MCF 10A (cell line): ENCODE measurements at regions of chr10 and their contacts with region 1.

Region 1: DNA sequence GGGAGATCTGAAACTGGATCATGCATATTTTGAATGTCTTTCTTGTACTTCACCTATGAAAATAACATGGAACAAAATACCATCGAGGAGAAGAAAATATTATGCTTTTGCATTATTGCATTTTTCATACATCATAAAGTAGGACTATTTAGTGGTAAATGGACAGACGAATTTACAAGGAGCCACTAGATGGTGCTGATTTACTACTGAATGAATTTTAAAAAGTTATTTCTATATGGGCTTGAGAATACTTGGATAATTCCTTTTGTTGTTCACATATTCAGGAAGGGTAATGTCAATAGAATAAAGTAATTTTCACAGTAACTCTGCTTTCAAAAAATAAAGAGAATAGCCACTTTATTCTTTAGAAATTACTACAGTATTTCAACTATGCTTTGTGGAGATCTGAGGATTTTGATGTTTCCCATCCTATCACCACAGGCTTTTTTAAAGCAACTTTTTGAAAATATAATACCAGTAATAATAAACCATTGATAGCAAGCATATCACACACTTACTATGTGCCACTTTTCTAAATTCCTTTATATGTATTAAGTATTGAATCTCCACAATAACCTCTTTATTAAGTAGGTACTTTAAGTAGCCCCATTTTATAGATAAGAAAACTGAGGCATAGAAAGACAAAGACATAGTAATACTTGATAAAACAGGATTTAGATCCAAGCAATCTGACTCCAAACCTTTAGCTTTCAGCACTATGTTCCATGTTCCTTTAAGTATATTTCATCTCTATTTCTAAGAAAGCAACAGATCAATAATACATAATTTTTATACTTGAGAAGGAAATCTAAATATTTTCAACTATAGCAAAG is 38.6 kb downstream of the NEBL start:
- DNase-seq: peak; percentile 53
- H3K4me3 Mint-ChIP-seq: no peak overlapping the region
- H3K27ac Mint-ChIP-seq: no peak overlapping the region
- H3K4me1 Mint-ChIP-seq: peaks cover 2% of the 10 kb centered on the region
- H3K27me3 Mint-ChIP-seq: no peaks in the 10 kb centered on the region
- CTCF ChIP-seq: peak; percentile 37

Region 2: GRCh38 chr10:20846263-20846662 is 12.2 kb before region 1 on chr10:
- CTCF ChIA-PET with region 1: no interaction called
- POLR2A ChIA-PET with region 1: no interaction called
- intact Hi-C with region 1: no loop called
- DNase-seq: no peak
- H3K4me3 Mint-ChIP-seq: no peak overlapping the region
- H3K27ac Mint-ChIP-seq: no peak overlapping the region
- H3K4me1 Mint-ChIP-seq: no peaks in the 10 kb centered on the region
- H3K27me3 Mint-ChIP-seq: no peaks in the 10 kb centered on the region
- CTCF ChIP-seq: no peak

Region 3: GRCh38 chr10:21265621-21266020 is 407.1 kb after region 1 on chr10:
- CTCF ChIA-PET with region 1: interaction called, 11 read pairs
- POLR2A ChIA-PET with region 1: no interaction called
- intact Hi-C with region 1: loop called (anchors 1 kb)
- DNase-seq: peak; percentile 83
- H3K4me3 Mint-ChIP-seq: peak overlapping the region; percentile 35
- H3K27ac Mint-ChIP-seq: peak overlapping the region; percentile 93
- H3K4me1 Mint-ChIP-seq: peaks cover 20% of the 10 kb centered on the region
- H3K27me3 Mint-ChIP-seq: no peaks in the 10 kb centered on the region
- CTCF ChIP-seq: no peak

Region 4: DNA sequence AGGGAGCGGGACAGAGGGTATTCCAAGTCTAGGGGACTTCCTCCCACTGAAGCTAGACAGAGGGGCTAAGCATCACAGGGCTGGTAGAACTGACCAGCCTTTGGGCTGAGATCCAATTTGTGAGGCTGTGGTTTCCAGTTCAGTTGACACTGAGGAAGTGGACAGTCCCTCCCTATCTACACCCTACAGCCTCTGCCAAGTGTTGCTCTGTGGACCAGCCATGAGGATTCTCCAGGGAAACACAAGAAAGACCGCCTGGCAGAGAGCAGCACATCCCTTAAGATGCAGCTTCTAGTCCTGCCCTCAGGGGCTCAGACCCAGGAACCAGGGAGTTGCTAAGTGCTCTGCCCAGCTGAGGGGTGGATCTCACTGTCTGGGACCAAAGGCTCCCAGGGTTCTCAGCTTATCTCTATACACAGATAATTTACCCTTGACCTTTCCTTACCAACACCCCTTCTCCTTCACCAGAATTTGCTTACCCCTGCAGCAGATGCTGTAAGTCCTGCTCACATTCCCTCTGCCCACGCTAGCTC is 415.0 kb after region 1 on chr10:
- CTCF ChIA-PET with region 1: interaction called, 11 read pairs
- POLR2A ChIA-PET with region 1: no interaction called
- intact Hi-C with region 1: loop called (anchors 1 kb)
- DNase-seq: no peak
- H3K4me3 Mint-ChIP-seq: no peak overlapping the region
- H3K27ac Mint-ChIP-seq: no peak overlapping the region
- H3K4me1 Mint-ChIP-seq: peaks cover 11% of the 10 kb centered on the region
- H3K27me3 Mint-ChIP-seq: no peaks in the 10 kb centered on the region
- CTCF ChIP-seq: no peak

Region 5: GRCh38 chr10:21488246-21488956 is 629.9 kb after region 1 on chr10:
- CTCF ChIA-PET with region 1: no interaction called
- POLR2A ChIA-PET with region 1: no interaction called
- intact Hi-C with region 1: loop called (anchors 10 kb)
- DNase-seq: peak; percentile 50
- H3K4me3 Mint-ChIP-seq: no peak overlapping the region
- H3K27ac Mint-ChIP-seq: no peak overlapping the region
- H3K4me1 Mint-ChIP-seq: peaks cover 7% of the 10 kb centered on the region
- H3K27me3 Mint-ChIP-seq: no peaks in the 10 kb centered on the region
- CTCF ChIP-seq: no peak

Region 6: GRCh38 chr10:21953585-21954057 is 1095.1 kb after region 1 on chr10:
- CTCF ChIA-PET with region 1: no interaction called
- POLR2A ChIA-PET with region 1: no interaction called
- intact Hi-C with region 1: loop called (anchors 10 kb)
- DNase-seq: peak; percentile 71
- H3K4me3 Mint-ChIP-seq: no peak overlapping the region
- H3K27ac Mint-ChIP-seq: no peak overlapping the region
- H3K4me1 Mint-ChIP-seq: no peaks in the 10 kb centered on the region
- H3K27me3 Mint-ChIP-seq: no peaks in the 10 kb centered on the region
- CTCF ChIP-seq: peak; percentile 40